Activated CD4-positive, alpha-beta memory T cell treated with anti-CD3 and anti-CD28 coated beads, Interleukin-2, amount 10 ng/mL, durations not matched to agents 7 days and 5 days (primary cell): ENCODE measurements at regions of chr16 and their contacts with region 1.

Region 1: GRCh38 chr16:66588981-66589713 is 9.9 kb downstream of the CMTM2 start:
- DNase-seq: peak; percentile 81
- H3K4me3 Mint-ChIP-seq: peak overlapping the region; percentile 67
- H3K27ac Mint-ChIP-seq: peak overlapping the region; percentile 47
- H3K4me1 Mint-ChIP-seq: peaks cover 26% of the 10 kb centered on the region
- H3K27me3 Mint-ChIP-seq: peaks cover 2% of the 10 kb centered on the region

Region 2: GRCh38 chr16:66474750-66475199 is 114.4 kb before region 1 on chr16:
- CTCF ChIA-PET with region 1: interaction called, 15 read pairs
- POLR2A ChIA-PET with region 1: interaction called, 4 read pairs
- DNase-seq: peak; percentile 79
- H3K4me3 Mint-ChIP-seq: no peak overlapping the region
- H3K27ac Mint-ChIP-seq: peak overlapping the region; percentile 22
- H3K4me1 Mint-ChIP-seq: peaks cover 43% of the 10 kb centered on the region
- H3K27me3 Mint-ChIP-seq: peaks cover 11% of the 10 kb centered on the region

Region 3: GRCh38 chr16:66483689-66484481 is 105.3 kb before region 1 on chr16:
- CTCF ChIA-PET with region 1: interaction called, 15 read pairs
- POLR2A ChIA-PET with region 1: no interaction called
- DNase-seq: peak; percentile 80
- H3K4me3 Mint-ChIP-seq: no peak overlapping the region
- H3K27ac Mint-ChIP-seq: no peak overlapping the region
- H3K4me1 Mint-ChIP-seq: peaks cover 33% of the 10 kb centered on the region
- H3K27me3 Mint-ChIP-seq: no peaks in the 10 kb centered on the region

Region 4: DNA sequence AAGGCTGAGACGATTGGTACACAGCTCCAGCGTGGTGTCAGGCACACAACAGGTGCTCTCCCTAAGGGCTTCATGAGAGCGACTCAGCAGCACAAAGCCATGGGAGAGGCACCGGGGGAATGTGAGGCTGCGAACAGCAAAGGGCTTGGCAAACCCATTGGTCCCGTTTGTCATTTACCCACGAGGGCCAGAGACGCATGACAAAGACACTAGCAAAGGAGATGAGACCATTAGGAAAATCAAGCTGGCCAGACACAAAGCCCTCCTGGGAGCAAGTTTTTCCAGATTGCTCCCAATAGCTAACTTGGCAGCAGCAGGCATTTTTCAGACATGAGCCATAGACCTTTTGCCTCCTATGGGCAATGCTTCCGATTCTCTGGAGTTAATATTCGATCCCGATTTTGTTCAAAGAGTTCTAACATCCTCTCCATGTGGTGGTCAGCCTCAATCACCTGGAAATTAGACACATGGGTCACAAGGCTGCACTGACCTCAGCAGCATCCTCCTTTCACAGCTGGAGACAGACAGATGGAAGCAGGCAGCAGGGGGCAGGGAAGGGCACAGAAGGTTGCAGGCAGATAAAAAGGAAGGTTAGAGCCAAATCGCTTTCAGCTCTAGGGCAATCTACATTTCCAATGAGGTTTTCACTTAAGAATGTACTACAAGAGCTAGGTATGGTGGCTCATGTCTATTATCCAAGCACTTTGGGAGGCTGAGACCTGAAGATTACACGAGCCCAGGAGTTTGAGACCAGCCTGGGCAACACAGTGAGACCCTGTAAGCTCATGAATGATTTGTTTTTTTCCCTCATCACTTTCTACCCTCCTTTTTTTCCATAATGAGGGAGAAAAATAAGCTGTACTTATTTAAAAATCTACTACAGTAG is 77.3 kb before region 1 on chr16:
- CTCF ChIA-PET with region 1: interaction called, 11 read pairs
- POLR2A ChIA-PET with region 1: no interaction called
- DNase-seq: no peak
- H3K4me3 Mint-ChIP-seq: no peak overlapping the region
- H3K27ac Mint-ChIP-seq: no peak overlapping the region
- H3K4me1 Mint-ChIP-seq: peaks cover 31% of the 10 kb centered on the region
- H3K27me3 Mint-ChIP-seq: no peaks in the 10 kb centered on the region

Region 5: GRCh38 chr16:66521951-66522771 is 67.0 kb before region 1 on chr16:
- CTCF ChIA-PET with region 1: interaction called, 17 read pairs
- POLR2A ChIA-PET with region 1: interaction called, 14 read pairs
- DNase-seq: peak; percentile 97
- H3K4me3 Mint-ChIP-seq: peak overlapping the region; percentile 64
- H3K27ac Mint-ChIP-seq: peak overlapping the region; percentile 95
- H3K4me1 Mint-ChIP-seq: peaks cover 95% of the 10 kb centered on the region
- H3K27me3 Mint-ChIP-seq: no peaks in the 10 kb centered on the region

Region 6: DNA sequence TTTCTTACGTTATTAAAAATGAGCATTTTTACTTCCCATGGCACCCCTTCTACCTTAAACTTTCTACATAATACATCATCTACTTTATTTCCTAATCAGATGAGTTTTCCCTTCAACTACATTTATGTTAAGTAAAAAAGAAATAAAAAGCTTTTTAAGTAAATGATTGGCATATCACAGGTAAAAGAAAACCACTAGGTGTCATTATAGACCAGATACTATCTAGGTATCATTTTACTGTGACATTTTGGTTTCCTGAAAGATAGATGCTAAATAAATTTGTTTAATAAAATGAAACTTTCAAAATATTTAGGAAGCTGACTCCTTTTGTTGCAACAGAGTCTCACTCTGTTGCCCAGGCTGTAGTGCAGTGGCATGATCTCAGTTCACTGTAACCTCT is 26.7 kb before region 1 on chr16:
- CTCF ChIA-PET with region 1: interaction called, 38 read pairs
- POLR2A ChIA-PET with region 1: interaction called, 15 read pairs
- DNase-seq: no peak
- H3K4me3 Mint-ChIP-seq: no peak overlapping the region
- H3K27ac Mint-ChIP-seq: peak overlapping the region; percentile 59
- H3K4me1 Mint-ChIP-seq: peaks cover 69% of the 10 kb centered on the region
- H3K27me3 Mint-ChIP-seq: no peaks in the 10 kb centered on the region

Region 7: GRCh38 chr16:66622863-66623262 is 33.7 kb after region 1 on chr16:
- CTCF ChIA-PET with region 1: no interaction called
- POLR2A ChIA-PET with region 1: no interaction called
- DNase-seq: no peak
- H3K4me3 Mint-ChIP-seq: no peak overlapping the region
- H3K27ac Mint-ChIP-seq: no peak overlapping the region
- H3K4me1 Mint-ChIP-seq: peaks cover 6% of the 10 kb centered on the region
- H3K27me3 Mint-ChIP-seq: no peaks in the 10 kb centered on the region